Lower leg skin (tissue), 4 donors: ENCODE measurements at regions of chr11 and their contacts with region 1.

Region 1: DNA sequence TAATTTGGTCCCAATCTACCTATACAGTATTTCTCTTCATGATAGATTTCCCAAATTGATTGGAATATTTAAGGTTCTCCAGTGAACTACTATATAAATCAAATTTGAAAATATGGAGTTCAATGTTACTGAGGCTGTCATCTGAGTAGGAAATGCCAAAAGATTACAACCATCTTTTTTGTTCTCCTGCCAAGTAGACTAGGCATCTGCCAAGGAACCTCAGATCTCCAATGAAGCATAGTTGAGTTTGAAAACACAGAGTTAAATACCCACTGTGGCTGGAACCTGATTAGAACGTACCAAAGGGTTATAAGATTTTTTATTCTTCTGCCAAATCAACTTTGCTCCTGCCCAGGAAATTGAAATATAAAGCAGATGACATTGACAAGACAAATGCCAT is 330.9 kb downstream of the CNTN5 start:
- DNase-seq: no peak
- H3K4me3 ChIP-seq: no peak overlapping the region
- CTCF ChIP-seq: no peak
- POLR2A ChIP-seq: no peak

Region 2: DNA sequence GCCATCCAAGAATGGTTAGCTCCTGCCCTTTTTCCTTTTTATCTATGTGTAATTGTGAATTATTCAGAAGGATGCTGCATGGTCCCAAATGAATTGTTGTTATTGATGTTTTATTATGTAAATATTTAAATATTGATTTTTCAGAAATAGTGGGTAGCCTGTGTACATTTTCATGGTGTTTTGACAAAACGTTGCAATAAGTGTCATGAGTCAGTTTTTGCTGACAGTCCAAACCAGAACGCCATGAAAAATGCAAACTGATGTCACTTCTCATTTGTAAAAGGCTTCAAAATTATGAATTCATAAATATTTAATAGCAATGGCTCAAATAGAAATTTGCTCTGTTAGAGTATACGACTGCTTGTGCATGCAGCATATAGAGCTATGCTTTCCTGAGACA is 91.7 kb after region 1 on chr11:
- intact Hi-C with region 1: no loop called
- DNase-seq: no peak
- H3K4me3 ChIP-seq: no peak overlapping the region
- CTCF ChIP-seq: no peak
- POLR2A ChIP-seq: no peak

Region 3: DNA sequence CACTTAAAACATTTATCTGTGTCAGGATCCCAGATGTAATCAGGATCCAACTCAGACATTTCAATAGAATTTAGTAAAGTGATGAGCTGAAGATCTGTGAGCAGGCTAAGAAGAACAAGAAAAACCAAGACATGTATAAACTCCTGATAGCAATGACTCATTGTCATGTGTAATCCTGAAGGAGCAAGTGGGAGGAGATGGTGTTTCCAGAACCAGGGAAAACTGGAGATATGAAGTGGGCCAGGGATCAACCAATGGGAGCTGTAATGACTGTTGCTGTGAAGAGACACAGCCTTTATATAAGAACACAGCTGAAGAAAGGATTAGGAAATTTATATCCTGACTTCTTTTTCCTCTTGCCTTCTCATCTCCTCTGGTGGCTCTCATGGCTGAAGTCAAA is 652.9 kb after region 1 on chr11:
- intact Hi-C with region 1: loop called (anchors 10 kb)
- DNase-seq: no peak
- H3K4me3 ChIP-seq: no peak overlapping the region
- CTCF ChIP-seq: no peak
- POLR2A ChIP-seq: no peak